ENCODE measurements at regions of chr4 and their contacts with region 1.

Region 1: GRCh38 chr4:12389604-12390003 is 960.9 kb upstream of the HS3ST1 start:
- DNase-seq: no peak
- H3K4me3 ChIP-seq: no peak overlapping the region
- H3K27ac ChIP-seq: no peak overlapping the region
- H3K4me1 ChIP-seq: no peaks in the 10 kb centered on the region
- H3K27me3 ChIP-seq: no peaks in the 10 kb centered on the region
- CTCF ChIP-seq: no peak
- EP300 ChIP-seq: no peak
- POLR2A ChIP-seq: no peak

Region 2: DNA sequence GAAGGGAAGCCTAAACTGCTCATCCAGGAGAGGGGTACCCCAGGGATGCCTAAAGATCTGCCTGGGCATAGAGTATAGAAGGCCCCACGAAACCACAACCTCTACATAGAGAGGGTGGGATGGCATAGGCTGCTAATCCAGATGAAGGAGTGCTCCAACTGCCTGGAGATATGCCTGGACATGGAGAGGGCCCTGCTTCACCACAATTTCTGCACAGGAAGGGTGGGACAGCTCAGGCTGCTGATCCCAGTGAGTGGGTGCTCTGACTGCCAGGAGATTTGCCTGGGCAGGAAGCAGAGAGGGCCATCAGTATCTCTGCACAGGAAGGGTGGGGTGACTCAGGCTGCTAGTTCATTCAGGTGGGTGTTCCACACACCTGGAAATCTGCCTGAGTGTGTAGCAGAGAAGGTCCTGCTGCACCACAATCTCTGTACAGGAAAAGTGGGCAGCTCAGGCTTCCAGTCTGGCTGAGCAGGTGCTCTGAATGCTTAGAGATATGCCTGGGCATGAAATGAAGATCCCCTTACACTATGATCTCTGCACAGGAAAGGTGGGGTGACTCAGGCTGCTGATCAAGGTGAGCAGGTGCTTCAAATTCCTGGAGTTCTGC is 1993.5 kb before region 1 on chr4:
- intact Hi-C with region 1: no loop called
- DNase-seq: no peak
- H3K4me3 ChIP-seq: no peak overlapping the region
- H3K27ac ChIP-seq: no peak overlapping the region
- H3K4me1 ChIP-seq: no peaks in the 10 kb centered on the region
- H3K27me3 ChIP-seq: no peaks in the 10 kb centered on the region
- CTCF ChIP-seq: no peak
- EP300 ChIP-seq: no peak
- POLR2A ChIP-seq: no peak

Region 3: GRCh38 chr4:12016729-12017128 is 372.9 kb before region 1 on chr4:
- intact Hi-C with region 1: loop called in 1 of 4 experiments (anchors 5 kb)
- DNase-seq: no peak
- H3K4me3 ChIP-seq: no peak overlapping the region
- H3K27ac ChIP-seq: no peak overlapping the region
- H3K4me1 ChIP-seq: no peaks in the 10 kb centered on the region
- H3K27me3 ChIP-seq: no peaks in the 10 kb centered on the region
- CTCF ChIP-seq: no peak
- EP300 ChIP-seq: no peak
- POLR2A ChIP-seq: no peak

Region 4: GRCh38 chr4:12409507-12410190 is 20.0 kb after region 1 on chr4:
- intact Hi-C with region 1: no loop called
- DNase-seq: no peak
- H3K4me3 ChIP-seq: no peak overlapping the region
- H3K27ac ChIP-seq: no peak overlapping the region
- H3K4me1 ChIP-seq: no peaks in the 10 kb centered on the region
- H3K27me3 ChIP-seq: no peaks in the 10 kb centered on the region
- CTCF ChIP-seq: no peak
- EP300 ChIP-seq: no peak
- POLR2A ChIP-seq: no peak

Region 5: DNA sequence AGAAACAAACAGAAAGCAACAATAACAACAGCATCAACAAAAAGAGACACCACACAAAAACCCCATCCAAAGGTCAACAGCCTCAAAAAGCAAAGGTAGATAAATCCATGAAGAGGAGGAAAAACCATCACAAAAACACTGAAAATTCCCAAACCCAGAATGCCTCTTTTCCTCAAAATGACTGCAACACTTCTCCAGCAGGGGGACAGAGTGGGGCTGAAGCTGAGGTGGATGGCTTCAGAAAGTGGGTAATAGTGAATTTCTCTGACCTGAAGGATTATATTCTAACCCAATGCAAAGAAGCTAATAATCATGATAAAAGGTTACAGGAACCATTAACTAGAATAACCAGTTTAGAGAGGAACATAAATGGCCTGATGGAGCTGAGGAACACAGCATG is 206.4 kb after region 1 on chr4:
- intact Hi-C with region 1: no loop called
- DNase-seq: no peak
- H3K4me3 ChIP-seq: no peak overlapping the region
- H3K27ac ChIP-seq: no peak overlapping the region
- H3K4me1 ChIP-seq: no peaks in the 10 kb centered on the region
- H3K27me3 ChIP-seq: no peaks in the 10 kb centered on the region
- CTCF ChIP-seq: no peak
- EP300 ChIP-seq: no peak
- POLR2A ChIP-seq: no peak

Measured in ovary (tissue), 10 donors.